ENCODE measurements at regions of chr14 and their contacts with region 1.

Region 1: DNA sequence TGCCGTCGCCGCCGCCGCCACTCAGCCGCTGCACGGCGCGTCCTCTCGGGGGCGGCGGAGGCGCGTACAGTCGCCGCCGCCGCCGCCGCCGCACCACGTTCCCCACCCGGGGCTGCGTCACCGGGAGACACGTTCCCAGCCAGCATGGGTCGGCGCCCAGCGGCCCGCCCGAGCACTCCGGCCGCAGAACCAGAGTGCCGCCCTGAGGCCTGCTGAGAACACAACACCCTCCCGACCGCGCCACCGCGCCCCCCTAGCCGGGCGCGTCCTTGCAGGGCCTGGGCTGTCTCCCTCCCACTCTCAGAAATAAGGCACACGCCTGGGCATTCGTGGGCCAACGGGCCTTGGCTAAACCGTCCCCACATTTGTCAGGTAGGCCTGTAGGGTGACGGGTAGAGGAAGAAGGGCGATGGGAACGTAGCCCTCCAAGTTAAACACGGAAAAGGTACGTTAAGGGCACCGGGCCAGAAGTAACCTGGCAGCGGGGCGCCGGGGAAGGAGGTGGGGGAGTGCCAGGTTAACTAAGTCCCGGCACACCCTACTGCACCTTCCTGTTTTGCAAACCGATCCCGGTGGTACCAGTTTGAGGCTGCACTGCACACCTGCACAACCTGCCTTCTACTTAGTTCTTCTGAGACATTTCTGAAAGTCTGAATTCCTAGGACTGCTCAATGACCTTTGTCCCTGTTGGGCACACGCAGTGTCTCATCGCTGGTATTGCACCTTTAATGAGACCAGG is at the start of gene MAP4K5:
- DNase-seq: peak; percentile 84 to 97 (median 94)
- ATAC-seq: peak; percentile 98
- H3K4me3 ChIP-seq: peak within 1 kb of the TSS; percentile 87 to 91
- H3K27ac ChIP-seq: peak within 1 kb of the TSS; percentile 96 to 98
- H3K4me1 ChIP-seq: peaks cover 9 to 58% of the 10 kb centered on the region in 2 donors
- H3K27me3 ChIP-seq: no peaks in the 10 kb centered on the region
- CTCF ChIP-seq: peak; percentile 88 to 89
- polyA plus RNA-seq, gene MAP4K5: 59.1 to 71.8 (median 64.9) TPM

Region 2: GRCh38 chr14:50311975-50312733 is 220.5 kb before region 1 on chr14 and contains the starts of genes DMAC2L and L2HGDH:
- intact Hi-C with region 1: loop called in 1 of 2 experiments (anchors 10 kb)
- DNase-seq: peak; percentile 93 to 96 (median 94)
- ATAC-seq: peak; percentile 98
- H3K4me3 ChIP-seq: peak within 1 kb of the TSS; percentile 69 to 89
- H3K27ac ChIP-seq: peak within 1 kb of the TSS; percentile 89 to 92
- H3K4me1 ChIP-seq: peaks cover 7 to 19% of the 10 kb centered on the region in 2 donors
- H3K27me3 ChIP-seq: no peaks in the 10 kb centered on the region
- CTCF ChIP-seq: peak in 1 of 2 donors; percentile 6
- polyA plus RNA-seq, gene DMAC2L: 23.0 to 26.6 (median 24.3) TPM
- polyA plus RNA-seq, gene L2HGDH: 5.9 to 6.5 (median 6.4) TPM

Region 3: DNA sequence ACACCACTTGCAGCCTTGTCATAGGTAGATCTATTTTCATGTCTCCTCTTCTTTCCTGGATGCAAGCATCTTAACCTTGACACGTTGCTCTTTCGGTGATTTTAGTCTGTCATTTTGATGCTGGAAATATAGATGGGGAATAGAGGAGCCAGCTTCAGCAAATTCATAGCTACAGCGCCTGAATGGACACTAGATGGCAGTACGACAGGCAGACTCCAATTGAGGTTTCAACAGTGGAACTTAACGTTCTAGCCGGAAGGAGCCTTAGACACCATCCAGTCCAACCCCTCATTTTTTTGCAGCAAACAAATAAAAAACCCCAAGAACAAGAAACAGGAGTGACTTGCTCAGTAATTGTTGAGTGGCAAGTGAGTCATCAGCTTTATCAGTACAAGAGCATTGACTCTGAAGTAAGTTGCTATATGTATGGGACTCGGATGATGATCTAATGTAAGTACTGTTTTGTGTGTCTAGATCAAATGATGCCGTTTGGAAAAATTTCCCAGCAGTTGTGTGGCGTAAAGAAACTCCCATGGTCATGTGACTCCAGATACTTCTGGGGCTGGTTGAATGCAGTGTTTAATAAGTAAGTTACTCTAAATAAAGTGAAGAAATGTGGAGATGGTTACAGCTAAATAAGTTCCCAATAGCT is 211.5 kb before region 1 on chr14:
- intact Hi-C with region 1: loop called (anchors 5 to 10 kb)
- DNase-seq: peak in 3 of 4 donors; percentile 59 to 87 (median 81)
- ATAC-seq: peak; percentile 99
- H3K4me3 ChIP-seq: peak overlapping the region in 1 of 2 donors; percentile 14
- H3K27ac ChIP-seq: peak overlapping the region; percentile 73 to 80
- H3K4me1 ChIP-seq: peaks cover 3 to 35% of the 10 kb centered on the region in 2 donors
- H3K27me3 ChIP-seq: no peaks in the 10 kb centered on the region
- CTCF ChIP-seq: peak; percentile 69 to 83

Region 4: GRCh38 chr14:50622978-50623377 is 90.3 kb after region 1 on chr14:
- intact Hi-C with region 1: no loop called
- DNase-seq: no peak
- ATAC-seq: no peak
- H3K4me3 ChIP-seq: no peak overlapping the region
- H3K27ac ChIP-seq: no peak overlapping the region
- H3K4me1 ChIP-seq: no peaks in the 10 kb centered on the region
- H3K27me3 ChIP-seq: no peaks in the 10 kb centered on the region
- CTCF ChIP-seq: no peak

Region 5: DNA sequence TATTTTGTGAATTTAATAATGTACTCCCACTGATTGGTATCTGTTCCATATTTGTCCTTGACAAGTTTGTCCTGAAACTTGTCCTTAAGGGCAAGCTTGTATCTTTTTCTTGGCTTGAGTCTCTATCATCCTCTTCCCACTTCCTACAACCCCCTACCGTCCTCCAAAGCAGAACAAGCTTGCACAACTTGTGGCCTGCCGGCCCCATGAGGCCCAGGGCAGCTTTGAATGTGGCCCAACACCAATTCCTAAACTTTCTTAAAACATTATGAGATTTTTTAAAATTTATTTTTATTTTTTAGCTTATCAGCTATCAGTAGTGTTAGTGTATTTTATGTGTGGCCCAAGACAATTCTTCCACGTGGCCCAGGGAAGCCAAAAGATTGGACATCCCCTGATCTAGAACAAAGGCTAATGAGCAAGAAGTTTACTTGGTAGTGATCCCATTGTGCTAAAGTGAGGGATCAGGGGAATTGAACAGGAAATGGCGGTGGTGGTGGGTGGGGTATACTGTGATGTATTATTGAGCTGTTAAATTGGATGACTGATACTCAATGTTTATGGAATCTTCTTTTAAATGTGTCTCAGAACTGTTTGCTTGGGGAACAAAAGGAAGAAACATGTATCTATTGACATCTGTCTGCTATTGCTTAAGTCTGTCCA is 745.2 kb after region 1 on chr14:
- intact Hi-C with region 1: no loop called
- DNase-seq: no peak
- ATAC-seq: no peak
- H3K4me3 ChIP-seq: no peak overlapping the region
- H3K27ac ChIP-seq: no peak overlapping the region
- H3K4me1 ChIP-seq: no peaks in the 10 kb centered on the region
- H3K27me3 ChIP-seq: no peaks in the 10 kb centered on the region
- CTCF ChIP-seq: no peak

Measured in left lung (tissue), 14 donors.